ENCODE measurements at regions of chr5 and their contacts with region 1.

Region 1: GRCh38 chr5:142769741-142770631 is at the start of gene ARHGAP26:
- DNase-seq: peak; percentile 97 to 98
- H3K4me3 ChIP-seq: peak within 1 kb of the TSS; percentile 98
- H3K4me3 Mint-ChIP-seq: peak within 1 kb of the TSS; percentile 99
- H3K27ac Mint-ChIP-seq: peak within 1 kb of the TSS; percentile 79
- H3K4me1 ChIP-seq: no peaks in the 10 kb centered on the region
- H3K4me1 Mint-ChIP-seq: peaks cover 15% of the 10 kb centered on the region
- H3K27me3 ChIP-seq: no peaks in the 10 kb centered on the region
- H3K27me3 Mint-ChIP-seq: no peaks in the 10 kb centered on the region
- CTCF ChIP-seq: peak in 1 of 2 experiments; percentile 38
- total RNA-seq, gene ARHGAP26: 74.6 and 79.8 TPM in 2 replicates

Region 2: GRCh38 chr5:142797420-142797819 is 27.4 kb after region 1 on chr5:
- CTCF ChIA-PET with region 1: interaction called, 18 read pairs
- POLR2A ChIA-PET with region 1: interaction called, 3 read pairs
- intact Hi-C with region 1: loop called (anchors 1 kb)
- DNase-seq: no peak
- H3K4me3 ChIP-seq: no peak overlapping the region
- H3K4me3 Mint-ChIP-seq: peak overlapping the region; percentile 60
- H3K27ac Mint-ChIP-seq: peak overlapping the region; percentile 67
- H3K4me1 ChIP-seq: peaks cover 54% of the 10 kb centered on the region
- H3K4me1 Mint-ChIP-seq: peaks cover 59% of the 10 kb centered on the region
- H3K27me3 ChIP-seq: no peaks in the 10 kb centered on the region
- H3K27me3 Mint-ChIP-seq: no peaks in the 10 kb centered on the region
- CTCF ChIP-seq: peak; percentile 17 to 18

Region 3: DNA sequence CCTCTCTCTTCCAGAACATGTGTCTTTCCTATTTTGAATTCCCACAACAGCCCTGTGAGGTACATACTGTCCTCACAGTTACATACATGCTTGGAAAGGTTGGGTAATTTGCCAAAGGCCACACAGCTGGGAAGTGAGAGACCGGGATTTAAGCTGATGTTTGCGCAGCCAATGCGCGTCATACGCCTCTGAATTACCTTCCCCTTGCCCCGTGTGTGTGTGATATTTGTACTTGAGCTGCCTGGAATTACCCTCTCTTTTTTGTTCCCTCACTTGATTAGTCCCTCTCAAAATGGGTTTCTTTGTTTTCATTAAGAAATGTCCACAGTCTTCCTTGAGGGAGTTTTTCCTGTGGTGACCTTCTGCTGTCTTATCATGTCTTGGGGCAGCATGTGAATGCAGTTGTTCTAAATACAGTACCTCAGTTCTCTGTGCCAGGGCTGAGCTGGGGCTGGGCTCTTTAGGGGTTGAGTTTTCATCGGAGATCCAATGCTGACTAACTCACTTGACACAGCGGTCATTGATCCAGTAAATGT is 94.8 kb after region 1 on chr5:
- CTCF ChIA-PET with region 1: interaction called, 63 read pairs
- POLR2A ChIA-PET with region 1: no interaction called
- intact Hi-C with region 1: loop called (anchors 1 kb)
- DNase-seq: peak in 1 of 2 experiments; percentile 30
- H3K4me3 ChIP-seq: no peak overlapping the region
- H3K4me3 Mint-ChIP-seq: no peak overlapping the region
- H3K27ac Mint-ChIP-seq: peak overlapping the region; percentile 20
- H3K4me1 ChIP-seq: peaks cover 50% of the 10 kb centered on the region
- H3K4me1 Mint-ChIP-seq: peaks cover 39% of the 10 kb centered on the region
- H3K27me3 ChIP-seq: no peaks in the 10 kb centered on the region
- H3K27me3 Mint-ChIP-seq: no peaks in the 10 kb centered on the region
- CTCF ChIP-seq: no peak

Region 4: DNA sequence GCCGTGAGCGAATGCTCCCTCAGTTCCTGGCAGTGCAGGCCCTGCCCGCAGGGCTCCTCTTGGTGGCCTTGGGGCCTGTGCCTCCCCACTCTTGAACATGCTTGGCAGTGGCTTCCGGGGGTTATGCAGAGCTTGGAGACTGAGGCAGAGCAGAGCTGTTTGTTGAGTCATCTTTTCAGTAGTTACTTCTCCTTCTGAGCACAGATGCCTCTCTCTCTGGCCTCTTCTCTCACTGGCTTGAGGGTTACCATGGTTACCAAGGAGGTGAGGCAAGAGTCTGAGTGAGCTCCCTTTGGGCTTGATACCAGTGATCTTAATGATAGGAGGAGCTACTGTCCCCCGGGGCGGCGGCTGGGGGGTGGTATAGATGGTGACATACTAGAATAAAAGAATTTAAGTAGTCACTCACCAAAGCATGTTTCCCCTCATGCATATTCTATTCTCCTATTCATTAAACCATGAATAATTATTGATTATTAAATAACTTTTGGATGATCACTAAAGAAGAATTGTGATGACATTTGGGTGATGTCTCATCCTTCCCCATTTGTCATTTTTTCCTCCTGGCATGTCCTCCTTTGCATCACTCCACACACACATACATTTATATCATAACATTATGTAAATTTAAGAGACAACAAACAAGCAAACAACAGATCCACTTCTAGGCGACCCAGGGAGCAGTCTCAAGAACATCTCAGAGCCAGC is 111.2 kb after region 1 on chr5:
- CTCF ChIA-PET with region 1: interaction called, 3 read pairs
- POLR2A ChIA-PET with region 1: no interaction called
- intact Hi-C with region 1: loop called (anchors 1 kb)
- DNase-seq: no peak
- H3K4me3 ChIP-seq: no peak overlapping the region
- H3K4me3 Mint-ChIP-seq: no peak overlapping the region
- H3K27ac Mint-ChIP-seq: no peak overlapping the region
- H3K4me1 ChIP-seq: peaks cover 17% of the 10 kb centered on the region
- H3K4me1 Mint-ChIP-seq: peaks cover 15% of the 10 kb centered on the region
- H3K27me3 ChIP-seq: no peaks in the 10 kb centered on the region
- H3K27me3 Mint-ChIP-seq: no peaks in the 10 kb centered on the region
- CTCF ChIP-seq: no peak